GM18951 (cell line): ENCODE measurements at regions of chr12 and their contacts with region 1.

Region 1: DNA sequence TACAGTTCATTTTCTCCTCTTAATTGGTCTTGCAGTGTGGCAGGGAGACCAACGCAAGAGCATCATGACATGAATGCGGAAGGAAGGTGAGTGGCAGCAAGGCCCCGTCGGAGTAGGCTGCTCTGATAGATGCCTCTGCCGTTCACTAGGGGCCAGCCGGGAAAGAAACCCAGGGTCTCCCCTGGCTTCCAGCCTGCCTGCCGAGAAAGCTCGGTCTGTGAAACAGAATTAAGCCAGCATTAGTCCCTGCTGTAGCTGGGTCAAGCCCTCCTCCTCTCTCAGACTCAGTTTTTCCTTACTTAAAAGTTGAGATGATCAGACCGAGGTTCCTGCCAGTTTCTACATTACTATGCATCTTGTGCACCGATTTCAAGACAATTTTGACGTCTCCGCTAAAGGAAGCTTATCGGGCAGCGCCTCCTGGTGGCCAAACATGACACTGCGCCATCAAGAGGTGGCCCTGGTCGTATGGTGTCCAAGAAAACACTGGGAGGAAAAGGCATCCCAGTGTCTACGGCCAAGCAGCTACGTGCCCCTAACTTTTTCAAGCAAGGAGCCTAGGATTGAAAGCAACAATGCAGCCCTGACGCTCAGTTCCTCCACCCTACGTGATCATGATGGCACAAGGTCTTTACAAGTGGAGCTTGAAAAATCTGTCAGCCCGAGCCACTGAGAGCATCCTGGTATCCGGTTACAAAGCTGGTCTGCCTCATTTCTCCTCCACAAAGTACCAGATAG is 131.6 kb downstream of the KSR2 start:
- POLR2A ChIP-seq: no peak

Region 2: DNA sequence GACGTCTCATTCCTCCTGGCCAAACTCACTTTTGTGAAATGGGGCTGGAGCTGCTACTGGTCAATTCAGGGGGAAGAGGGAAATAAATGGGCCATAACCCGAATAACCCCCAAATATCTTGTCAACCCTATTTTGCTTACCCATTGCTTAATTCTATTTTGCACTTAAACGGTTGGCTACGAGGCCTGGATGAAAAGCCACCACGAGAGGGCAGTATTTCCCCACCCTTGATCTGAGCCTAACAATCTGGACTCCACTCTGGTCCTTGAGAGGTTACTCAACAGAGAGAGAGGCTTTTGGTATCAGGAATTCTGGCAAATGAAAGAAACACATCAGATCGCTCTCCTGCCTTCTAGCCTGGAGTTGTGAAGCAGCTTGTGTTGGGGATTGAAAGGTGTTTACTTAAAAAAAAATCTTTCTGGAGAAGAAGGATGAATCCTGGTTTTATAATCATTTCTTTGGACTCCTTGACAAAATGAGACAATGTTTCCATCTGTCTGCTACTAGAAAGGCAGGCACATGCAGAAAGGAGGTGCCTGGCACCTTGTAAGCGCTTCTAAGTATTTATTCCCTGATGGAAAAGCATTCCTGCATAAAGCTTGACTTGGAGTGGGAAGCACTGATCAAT is 624.5 kb before region 1 on chr12:
- in situ Hi-C with region 1: loop called (anchors 25 kb)
- POLR2A ChIP-seq: no peak

Region 3: DNA sequence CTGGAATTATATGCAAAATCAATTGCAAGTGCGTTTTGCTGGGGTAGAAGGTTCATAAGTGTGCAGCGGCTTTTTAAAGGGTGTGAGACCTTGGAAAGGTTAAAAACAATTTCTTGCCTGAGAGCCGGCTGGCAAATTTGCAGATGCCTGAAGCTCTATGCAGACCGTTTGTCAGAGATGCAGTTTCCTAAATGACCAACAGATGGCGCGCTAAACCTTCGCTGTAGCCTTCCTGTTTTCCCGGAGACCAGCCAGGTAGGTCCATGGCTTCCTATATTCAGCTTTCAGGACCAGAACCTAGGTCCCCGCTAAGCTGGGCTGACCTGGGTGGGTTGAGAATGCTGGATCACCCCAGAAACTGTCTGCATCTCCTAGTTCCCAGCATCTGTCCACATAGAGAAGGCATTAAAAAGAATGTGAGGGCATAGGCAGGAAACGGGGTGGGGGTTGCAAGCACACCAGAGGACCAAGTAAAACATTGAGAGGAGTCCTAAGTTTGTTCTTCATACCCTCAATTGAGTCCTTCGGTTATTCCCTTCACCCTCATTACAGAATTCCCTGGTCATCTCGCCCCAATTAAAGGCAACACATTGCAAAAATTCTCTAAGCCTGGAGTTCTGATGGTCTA is 470.0 kb before region 1 on chr12:
- in situ Hi-C with region 1: loop called (anchors 25 kb)
- POLR2A ChIP-seq: no peak

Region 4: DNA sequence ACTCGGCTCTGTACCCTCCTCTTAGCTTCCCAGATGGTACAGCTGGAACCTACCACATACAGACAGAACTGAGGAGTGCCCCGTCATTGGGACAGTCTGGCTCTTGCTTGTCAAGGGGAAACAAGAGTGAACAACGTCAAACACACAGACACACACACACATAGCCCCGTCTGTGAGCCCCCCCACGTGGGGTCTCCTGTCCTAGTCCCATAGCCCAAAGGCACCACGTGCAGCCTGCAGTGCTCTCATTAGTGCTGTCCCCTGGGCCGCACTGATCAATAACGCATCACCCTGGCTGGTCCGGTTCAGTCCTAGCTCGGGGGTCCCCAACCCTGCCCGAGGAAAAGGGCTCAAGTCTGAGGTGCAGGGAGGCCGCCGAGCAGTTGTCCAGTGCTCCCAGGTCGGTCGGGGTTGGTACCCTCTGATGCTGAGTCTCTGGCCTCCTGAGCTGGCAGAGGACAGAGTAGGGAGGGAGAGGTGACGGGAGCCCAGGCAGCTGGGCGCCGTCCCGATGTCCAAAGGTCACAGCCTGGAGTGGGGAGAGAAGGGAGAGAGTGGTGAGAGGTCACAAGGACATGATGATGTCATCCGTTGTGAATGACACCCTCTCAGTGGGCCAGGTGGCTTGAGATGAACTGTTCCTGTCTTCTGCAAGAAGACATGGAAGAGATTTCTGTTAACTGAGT is 370.3 kb before region 1 on chr12:
- in situ Hi-C with region 1: no loop called
- POLR2A ChIP-seq: no peak